HCT116 (cell line): ENCODE measurements at regions of chr3 and their contacts with region 1.

Region 1: DNA sequence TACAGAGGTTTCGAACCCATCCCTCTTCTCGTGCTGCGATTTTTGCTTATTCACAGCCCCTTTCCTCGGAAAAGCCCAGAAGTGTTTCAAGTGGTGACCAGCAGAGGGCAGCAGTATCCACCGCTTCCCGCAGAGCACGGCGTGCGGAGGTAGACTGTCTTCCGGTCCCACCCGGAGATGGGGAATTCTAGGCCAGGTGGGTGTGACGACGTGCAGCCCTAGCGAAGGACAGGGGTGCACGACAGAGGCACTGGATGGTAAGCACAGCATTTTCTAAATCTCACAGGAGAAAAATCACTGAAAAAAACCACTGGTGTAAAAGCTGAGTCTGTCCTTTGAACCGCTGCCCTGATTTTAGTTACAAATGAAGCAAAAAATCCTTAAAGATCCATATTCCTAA is 7.4 kb upstream of the PSMD6 start:
- DNase-seq: peak; percentile 71
- ATAC-seq: peak; percentile 98
- H3K4me3 ChIP-seq: peak overlapping the region in 1 of 2 experiments; percentile 22; a peak in 2 of 4 replicates
- H3K27ac ChIP-seq: no peak overlapping the region
- H3K4me1 ChIP-seq: peaks cover 3 to 6% of the 10 kb centered on the region in 2 experiments; a peak in 3 of 4 replicates
- H3K27me3 ChIP-seq: peaks cover 27% of the 10 kb centered on the region
- CTCF ChIP-seq: peak; percentile 78 to 91 (median 83)
- POLR2A ChIP-seq: no peak
- RAD21 ChIP-seq: peak; percentile 93

Region 2: DNA sequence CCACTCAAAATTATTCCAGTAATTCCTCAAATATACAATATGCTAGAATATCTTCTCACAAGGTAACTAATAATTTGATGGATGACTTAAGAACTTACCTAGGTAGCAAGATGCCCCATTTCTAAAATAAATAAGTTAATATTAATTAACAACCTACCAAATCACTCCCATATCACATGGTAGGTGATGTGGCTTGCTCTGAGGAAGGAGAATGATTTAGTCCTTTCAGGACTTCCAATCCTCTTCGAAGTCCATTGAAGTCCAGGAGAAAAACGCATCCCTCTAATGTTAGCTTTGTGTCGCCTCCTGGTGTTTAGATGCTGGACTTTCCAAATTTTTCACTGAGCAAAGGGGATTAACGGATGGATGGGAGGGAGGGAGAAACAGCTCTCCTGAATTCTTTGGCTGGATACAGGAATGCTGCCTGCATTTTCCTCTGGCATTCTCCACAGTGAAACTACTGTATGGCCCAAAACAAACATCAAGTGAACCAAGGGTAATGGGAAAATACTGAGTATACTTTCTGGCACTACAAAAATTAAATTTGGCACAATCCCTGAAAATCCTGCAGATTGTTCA is 135.9 kb after region 1 on chr3:
- CTCF ChIA-PET with region 1: no interaction called
- POLR2A ChIA-PET with region 1: no interaction called
- RAD21 ChIA-PET with region 1: no interaction called
- intact Hi-C with region 1: loop called (anchors 2 kb)
- DNase-seq: peak; percentile 10
- ATAC-seq: peak; percentile 57
- H3K4me3 ChIP-seq: no peak overlapping the region
- H3K27ac ChIP-seq: no peak overlapping the region
- H3K4me1 ChIP-seq: no peaks in the 10 kb centered on the region
- H3K27me3 ChIP-seq: peaks cover 28% of the 10 kb centered on the region
- CTCF ChIP-seq: peak; percentile 24 to 54 (median 48); a peak in 4 of 6 replicates
- POLR2A ChIP-seq: no peak
- RAD21 ChIP-seq: peak; percentile 48

Region 3: GRCh38 chr3:64327100-64327804 is 296.5 kb after region 1 on chr3:
- CTCF ChIA-PET with region 1: no interaction called
- POLR2A ChIA-PET with region 1: no interaction called
- RAD21 ChIA-PET with region 1: no interaction called
- intact Hi-C with region 1: no loop called
- DNase-seq: no peak
- ATAC-seq: peak; percentile 64; the same call in 1 of the 2 replicates
- H3K4me3 ChIP-seq: no peak overlapping the region
- H3K27ac ChIP-seq: no peak overlapping the region
- H3K4me1 ChIP-seq: no peaks in the 10 kb centered on the region
- H3K27me3 ChIP-seq: peaks cover 5% of the 10 kb centered on the region; the same call in 1 of the 2 replicates
- CTCF ChIP-seq: no peak
- POLR2A ChIP-seq: no peak
- RAD21 ChIP-seq: no peak

Region 4: DNA sequence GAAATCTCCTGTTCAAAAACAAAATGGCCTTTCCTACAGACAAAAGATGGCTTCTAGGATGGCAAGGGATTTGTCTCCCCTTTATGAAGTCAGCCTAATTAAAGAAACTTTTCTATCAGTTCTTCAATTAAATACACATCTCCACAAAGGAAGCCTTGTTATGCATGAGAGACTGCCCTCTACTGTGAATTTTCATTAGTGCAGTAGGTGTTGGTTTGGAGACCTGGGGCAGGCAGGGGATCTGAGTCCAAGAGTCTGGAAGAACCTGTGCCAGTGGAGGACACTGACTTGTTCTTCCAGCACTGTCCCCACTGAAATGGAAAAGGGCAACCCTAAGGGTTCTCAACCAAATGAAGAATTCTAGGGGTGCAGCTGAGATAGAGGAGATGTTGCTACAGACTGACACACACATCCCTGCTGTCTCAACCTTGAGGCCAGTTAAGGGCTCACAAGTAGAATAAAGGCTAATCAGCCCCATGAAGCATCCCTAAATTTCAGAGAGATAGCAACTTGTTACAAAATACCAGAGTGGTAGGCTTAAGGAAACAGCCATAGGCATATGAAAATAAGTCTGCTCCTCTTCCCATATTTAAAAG is 368.6 kb after region 1 on chr3:
- CTCF ChIA-PET with region 1: no interaction called
- POLR2A ChIA-PET with region 1: no interaction called
- RAD21 ChIA-PET with region 1: no interaction called
- intact Hi-C with region 1: loop called (anchors 1 kb)
- DNase-seq: peak; percentile 7
- ATAC-seq: peak; percentile 75
- H3K4me3 ChIP-seq: no peak overlapping the region
- H3K27ac ChIP-seq: no peak overlapping the region
- H3K4me1 ChIP-seq: no peaks in the 10 kb centered on the region
- H3K27me3 ChIP-seq: peaks cover 6% of the 10 kb centered on the region
- CTCF ChIP-seq: peak; percentile 38 to 70 (median 54); a peak in 4 of 6 replicates
- POLR2A ChIP-seq: no peak
- RAD21 ChIP-seq: peak; percentile 62

Region 5: DNA sequence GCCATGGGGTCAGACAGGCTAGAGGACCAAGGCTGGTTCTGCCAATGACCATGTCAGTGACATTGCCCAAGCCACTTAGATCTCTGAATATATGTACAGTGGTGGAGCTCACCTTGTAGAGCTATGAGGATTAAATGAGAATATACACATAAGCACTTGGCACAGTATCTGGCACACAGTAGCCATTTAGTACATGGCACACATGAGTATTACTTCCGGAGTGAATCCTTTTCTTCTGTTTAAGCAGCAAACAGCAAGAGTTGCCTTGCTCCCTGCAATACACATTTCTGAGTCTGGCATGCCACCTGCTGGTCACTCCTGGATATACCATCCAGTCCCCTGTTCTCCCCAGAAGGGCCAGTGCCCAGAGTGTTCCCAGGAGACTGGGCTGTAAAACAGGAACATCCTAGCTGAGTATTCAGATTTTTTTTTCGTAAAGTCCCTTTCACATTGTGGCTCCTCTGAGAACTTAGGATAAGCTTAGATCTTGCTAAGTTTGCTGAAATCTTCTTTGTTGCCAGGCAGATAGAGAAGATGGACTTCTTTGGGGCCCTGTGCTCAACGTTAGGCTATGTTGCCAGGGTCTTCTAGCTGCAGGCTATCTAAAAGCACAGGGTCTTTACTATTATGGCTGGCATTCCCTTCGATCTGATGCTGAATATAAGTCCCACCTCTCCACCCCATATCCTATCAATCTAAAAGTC is 453.7 kb after region 1 on chr3:
- CTCF ChIA-PET with region 1: interaction called, 14 read pairs
- POLR2A ChIA-PET with region 1: no interaction called
- RAD21 ChIA-PET with region 1: interaction called in 1 of 2 experiments, 6 read pairs
- intact Hi-C with region 1: loop called (anchors 1 kb)
- DNase-seq: peak; percentile 54
- ATAC-seq: peak; percentile 99
- H3K4me3 ChIP-seq: no peak overlapping the region
- H3K27ac ChIP-seq: no peak overlapping the region
- H3K4me1 ChIP-seq: no peaks in the 10 kb centered on the region
- H3K27me3 ChIP-seq: 0 out of 2 replicates have a peak, but pooled peaks cover 4% of the 10 kb centered on the region
- CTCF ChIP-seq: peak; percentile 71 to 79 (median 74)
- POLR2A ChIP-seq: no peak
- RAD21 ChIP-seq: peak; percentile 87